ENCODE measurements at regions of chr10 and their contacts with region 1.

Region 1: DNA sequence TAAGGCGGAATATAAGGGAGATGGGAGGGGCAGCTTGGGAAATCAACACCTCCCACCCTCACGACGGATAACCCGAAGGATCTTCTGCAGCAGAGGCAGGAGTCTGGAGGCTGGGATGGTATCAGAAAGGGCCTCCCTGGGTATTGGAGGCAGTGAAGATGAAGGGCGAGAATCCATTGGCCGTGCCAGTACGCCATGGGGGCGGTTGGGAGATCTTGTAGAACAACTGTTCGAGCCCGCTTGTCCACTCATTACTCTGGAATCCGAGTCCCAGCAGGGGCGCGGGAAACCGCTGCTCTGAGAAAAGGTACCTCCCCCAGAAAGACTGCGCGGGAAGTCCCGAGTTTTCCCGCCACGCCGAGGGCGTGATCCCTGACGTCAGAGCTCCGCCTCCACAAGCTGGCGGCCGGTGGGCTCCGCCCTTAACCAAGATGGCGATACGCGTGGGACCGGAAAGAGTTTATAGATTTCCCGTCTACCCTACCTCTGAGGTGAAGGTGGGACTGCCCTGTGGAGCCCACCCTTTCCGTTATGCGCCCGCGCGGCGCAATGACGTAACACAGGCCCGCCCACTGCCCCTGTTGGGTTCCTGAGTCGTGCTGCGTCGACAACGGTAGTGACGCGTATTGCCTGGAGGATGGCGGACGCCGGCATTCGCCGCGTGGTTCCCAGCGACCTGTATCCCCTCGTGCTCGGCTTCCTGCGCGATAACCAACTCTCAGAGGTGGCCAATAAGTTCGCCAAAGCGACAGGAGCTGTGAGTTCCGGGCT is at the start of gene NOLC1:
- DNase-seq: peak; percentile 100
- ATAC-seq: peak; percentile 97
- H3K4me3 Mint-ChIP-seq: peak within 1 kb of the TSS; percentile 97
- H3K27ac Mint-ChIP-seq: peak within 1 kb of the TSS; percentile 99
- H3K4me1 Mint-ChIP-seq: peaks cover 43% of the 10 kb centered on the region
- H3K27me3 Mint-ChIP-seq: no peaks in the 10 kb centered on the region
- CTCF ChIP-seq: no peak
- total RNA-seq, gene NOLC1: 210 to 215 TPM

Region 2: DNA sequence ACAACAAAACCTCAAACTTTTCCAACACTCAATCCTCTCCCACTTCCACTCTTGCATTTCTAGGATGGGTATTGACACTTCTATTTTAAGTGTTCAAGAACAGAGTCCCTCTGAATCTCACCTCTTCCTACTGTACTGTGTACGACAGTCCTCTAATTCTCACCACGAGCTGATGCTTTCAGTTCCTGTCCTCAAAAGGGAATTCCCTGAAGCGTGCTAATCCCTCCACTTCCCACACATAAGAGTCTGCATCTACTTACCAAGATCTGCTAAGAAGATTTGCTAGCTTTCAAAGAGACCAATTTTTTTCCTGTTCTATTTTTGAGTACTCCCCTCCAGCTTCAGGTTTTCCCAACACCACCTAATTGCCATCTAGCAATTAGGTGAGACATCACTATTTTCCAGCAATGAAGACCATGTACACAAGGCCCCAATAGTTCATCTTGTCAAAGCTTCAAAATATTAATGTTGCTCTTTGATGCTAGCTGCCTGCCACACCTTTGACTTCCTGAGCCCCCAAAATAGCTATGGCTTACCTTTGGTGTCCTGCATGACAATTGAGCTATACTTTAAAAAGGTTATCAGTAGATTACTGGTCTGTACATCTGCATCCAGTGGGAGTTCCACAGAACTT is 150.4 kb before region 1 on chr10:
- CTCF ChIA-PET with region 1: no interaction called
- POLR2A ChIA-PET with region 1: no interaction called
- intact Hi-C with region 1: no loop called
- DNase-seq: peak; percentile 4
- ATAC-seq: peak; percentile 51
- H3K4me3 Mint-ChIP-seq: no peak overlapping the region
- H3K27ac Mint-ChIP-seq: peak overlapping the region; percentile 42
- H3K4me1 Mint-ChIP-seq: peaks cover 18% of the 10 kb centered on the region
- H3K27me3 Mint-ChIP-seq: no peaks in the 10 kb centered on the region
- CTCF ChIP-seq: no peak

Region 3: DNA sequence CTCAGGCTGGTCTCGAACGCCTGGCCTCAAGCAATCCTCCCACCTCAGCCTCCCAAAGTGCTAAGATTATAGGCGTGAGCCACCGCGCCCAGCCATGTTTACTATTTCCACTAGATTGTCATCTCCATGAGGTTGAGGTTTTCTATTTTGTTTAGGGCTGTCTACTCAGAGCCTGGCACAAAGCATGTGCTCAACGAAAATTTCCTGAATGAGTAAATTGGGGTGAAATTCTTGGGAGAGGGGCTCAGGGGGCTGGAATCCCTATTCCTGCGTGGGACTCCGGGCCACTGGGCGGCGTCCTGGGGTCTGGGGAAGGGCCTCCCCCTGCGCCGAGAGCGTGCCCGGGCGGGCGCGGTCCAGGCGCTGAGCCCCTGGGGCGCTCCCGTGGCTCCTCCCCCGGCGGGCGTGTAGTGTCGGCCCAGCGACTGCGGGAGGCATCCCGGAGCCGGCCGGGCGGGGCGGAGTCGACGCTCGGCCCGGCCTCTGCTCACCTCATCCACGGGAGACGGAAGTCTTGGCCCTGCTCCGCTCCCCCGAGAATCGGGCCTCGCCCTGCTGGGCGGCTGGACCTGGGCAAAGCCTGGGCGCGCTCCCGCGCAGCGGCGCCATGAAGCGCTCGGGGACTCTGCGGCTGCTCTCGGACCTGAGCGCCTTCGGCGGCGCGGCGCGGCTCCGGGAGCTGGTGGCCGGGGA is 86.9 kb before region 1 on chr10 and contains the start of gene HPS6:
- CTCF ChIA-PET with region 1: no interaction called
- POLR2A ChIA-PET with region 1: no interaction called
- intact Hi-C with region 1: no loop called
- DNase-seq: peak; percentile 91
- ATAC-seq: peak; percentile 99
- H3K4me3 Mint-ChIP-seq: peak within 1 kb of the TSS; percentile 84
- H3K27ac Mint-ChIP-seq: peak within 1 kb of the TSS; percentile 90
- H3K4me1 Mint-ChIP-seq: peaks cover 33% of the 10 kb centered on the region
- H3K27me3 Mint-ChIP-seq: no peaks in the 10 kb centered on the region
- CTCF ChIP-seq: no peak
- total RNA-seq, gene HPS6: 18.0 to 18.1 TPM

Region 4: DNA sequence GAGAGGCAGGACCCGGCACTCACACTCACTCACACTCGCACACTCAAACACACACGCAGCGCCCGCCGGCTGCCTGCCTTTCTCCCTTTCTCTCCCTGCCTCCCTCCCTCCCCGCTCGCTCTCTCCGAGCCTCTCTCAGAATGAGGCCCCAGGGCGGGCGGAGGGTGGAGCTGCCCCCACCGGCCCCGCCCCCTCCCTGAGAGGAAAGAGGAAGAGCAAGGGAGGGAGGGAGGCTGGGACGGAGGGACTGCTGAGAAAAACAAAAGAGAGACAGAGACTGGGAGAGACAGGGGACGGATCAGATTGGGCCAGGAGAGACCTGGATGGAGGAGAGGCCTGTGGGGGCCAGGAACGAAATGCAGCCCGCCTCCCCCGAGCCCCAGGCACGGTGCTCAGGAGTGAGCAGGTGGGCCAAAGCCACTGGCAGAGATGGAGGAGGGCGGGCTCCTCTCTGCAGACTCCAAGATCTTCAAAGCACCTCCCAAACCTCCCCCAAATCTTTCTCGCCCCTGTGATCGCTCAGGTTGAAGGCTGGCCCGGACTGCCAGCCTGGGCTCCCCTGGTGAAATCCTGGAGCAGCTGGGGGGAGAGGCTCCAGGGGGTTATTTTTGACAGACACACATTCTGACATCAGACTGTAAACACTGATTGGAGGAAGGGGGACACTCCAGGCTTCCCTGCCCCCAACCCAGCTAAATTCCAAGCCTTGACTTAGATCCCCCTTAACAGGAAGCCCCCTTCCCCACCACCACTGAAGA is 36.9 kb before region 1 on chr10:
- CTCF ChIA-PET with region 1: interaction called, 5 read pairs
- POLR2A ChIA-PET with region 1: interaction called, 65 read pairs
- intact Hi-C with region 1: no loop called
- DNase-seq: peak; percentile 91
- ATAC-seq: peak; percentile 61
- H3K4me3 Mint-ChIP-seq: peak overlapping the region; percentile 84
- H3K27ac Mint-ChIP-seq: peak overlapping the region; percentile 100
- H3K4me1 Mint-ChIP-seq: peaks cover 50% of the 10 kb centered on the region
- H3K27me3 Mint-ChIP-seq: no peaks in the 10 kb centered on the region
- CTCF ChIP-seq: no peak

Region 5: GRCh38 chr10:102132563-102133372 is 19.2 kb before region 1 on chr10 and contains the start of gene PPRC1:
- CTCF ChIA-PET with region 1: interaction called, 13 read pairs
- POLR2A ChIA-PET with region 1: interaction called, 250 read pairs
- intact Hi-C with region 1: loop called (anchors 2 kb)
- DNase-seq: peak; percentile 99
- ATAC-seq: peak; percentile 95
- H3K4me3 Mint-ChIP-seq: peak within 1 kb of the TSS; percentile 99
- H3K27ac Mint-ChIP-seq: peak within 1 kb of the TSS; percentile 97
- H3K4me1 Mint-ChIP-seq: peaks cover 36% of the 10 kb centered on the region
- H3K27me3 Mint-ChIP-seq: no peaks in the 10 kb centered on the region
- CTCF ChIP-seq: peak; percentile 97
- total RNA-seq, gene PPRC1: 68.6 to 72.2 TPM

Region 6: DNA sequence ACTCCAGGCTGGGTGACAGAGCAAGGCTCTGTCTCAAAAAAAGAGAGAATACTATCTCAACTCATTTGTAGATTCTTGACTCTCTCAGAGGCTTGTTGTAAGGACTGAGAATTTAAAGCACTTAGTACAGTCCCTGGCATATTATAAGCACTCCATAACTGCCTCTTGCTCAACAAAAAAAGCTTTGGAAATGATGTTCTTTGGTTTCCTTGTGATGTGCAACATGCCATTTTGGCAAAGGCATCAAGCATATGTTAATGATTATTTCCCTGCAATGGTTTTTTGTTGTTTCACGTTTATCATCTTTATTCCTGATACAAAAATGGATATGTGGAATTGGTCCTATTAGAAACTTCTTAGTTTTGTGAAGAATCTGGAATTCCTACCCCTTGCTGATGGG is 15.9 kb after region 1 on chr10:
- CTCF ChIA-PET with region 1: interaction called, 88 read pairs
- POLR2A ChIA-PET with region 1: interaction called, 51 read pairs
- intact Hi-C with region 1: no loop called
- DNase-seq: no peak
- ATAC-seq: no peak
- H3K4me3 Mint-ChIP-seq: no peak overlapping the region
- H3K27ac Mint-ChIP-seq: no peak overlapping the region
- H3K4me1 Mint-ChIP-seq: peaks cover 5% of the 10 kb centered on the region
- H3K27me3 Mint-ChIP-seq: no peaks in the 10 kb centered on the region
- CTCF ChIP-seq: no peak

Measured in activated CD8-positive, alpha-beta T cell treated with anti-CD3 and anti-CD28 coated beads for 36 hours (primary cell).